ENCODE measurements at regions of chr1 and their contacts with region 1.

Region 1: DNA sequence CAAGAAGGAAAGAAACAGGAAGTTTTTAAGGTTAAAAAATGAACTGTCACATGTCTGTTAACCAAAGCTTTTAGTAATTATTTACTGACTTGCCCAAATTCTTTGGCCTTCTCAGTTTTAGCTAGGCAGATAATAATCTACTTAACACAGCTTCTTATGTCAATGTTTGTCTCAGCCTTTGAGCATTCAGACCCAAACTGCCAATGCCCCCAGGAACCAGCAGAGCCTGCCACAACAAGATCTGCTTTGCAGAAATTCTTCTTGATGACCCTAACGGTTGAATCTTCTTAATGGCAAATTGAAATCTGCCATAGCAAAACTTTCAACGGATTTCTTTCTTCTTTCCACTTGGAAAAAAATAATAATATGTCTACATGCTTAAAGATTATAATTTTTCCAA is 792.4 kb upstream of the ADGRL2 start:
- DNase-seq: peak; percentile 1 to 29
- H3K4me3 ChIP-seq: no peak overlapping the region
- H3K4me3 Mint-ChIP-seq: no peak overlapping the region
- H3K27ac Mint-ChIP-seq: no peak overlapping the region
- H3K4me1 ChIP-seq: 0 out of 2 replicates have a peak, but pooled peaks cover 12% of the 10 kb centered on the region
- H3K4me1 Mint-ChIP-seq: peaks cover 6% of the 10 kb centered on the region
- H3K27me3 ChIP-seq: no peaks in the 10 kb centered on the region
- H3K27me3 Mint-ChIP-seq: no peaks in the 10 kb centered on the region
- CTCF ChIP-seq: no peak

Region 2: GRCh38 chr1:81034291-81034690 is 26.0 kb after region 1 on chr1:
- CTCF ChIA-PET with region 1: no interaction called
- POLR2A ChIA-PET with region 1: no interaction called
- intact Hi-C with region 1: loop called (anchors 2 kb)
- DNase-seq: peak; percentile 47 to 60
- H3K4me3 ChIP-seq: no peak overlapping the region
- H3K4me3 Mint-ChIP-seq: no peak overlapping the region
- H3K27ac Mint-ChIP-seq: no peak overlapping the region
- H3K4me1 ChIP-seq: no peaks in the 10 kb centered on the region; the same call in 1 of the 2 replicates
- H3K4me1 Mint-ChIP-seq: no peaks in the 10 kb centered on the region
- H3K27me3 ChIP-seq: no peaks in the 10 kb centered on the region
- H3K27me3 Mint-ChIP-seq: no peaks in the 10 kb centered on the region
- CTCF ChIP-seq: no peak